ENCODE measurements at regions of chr19 and their contacts with region 1.

Region 1: DNA sequence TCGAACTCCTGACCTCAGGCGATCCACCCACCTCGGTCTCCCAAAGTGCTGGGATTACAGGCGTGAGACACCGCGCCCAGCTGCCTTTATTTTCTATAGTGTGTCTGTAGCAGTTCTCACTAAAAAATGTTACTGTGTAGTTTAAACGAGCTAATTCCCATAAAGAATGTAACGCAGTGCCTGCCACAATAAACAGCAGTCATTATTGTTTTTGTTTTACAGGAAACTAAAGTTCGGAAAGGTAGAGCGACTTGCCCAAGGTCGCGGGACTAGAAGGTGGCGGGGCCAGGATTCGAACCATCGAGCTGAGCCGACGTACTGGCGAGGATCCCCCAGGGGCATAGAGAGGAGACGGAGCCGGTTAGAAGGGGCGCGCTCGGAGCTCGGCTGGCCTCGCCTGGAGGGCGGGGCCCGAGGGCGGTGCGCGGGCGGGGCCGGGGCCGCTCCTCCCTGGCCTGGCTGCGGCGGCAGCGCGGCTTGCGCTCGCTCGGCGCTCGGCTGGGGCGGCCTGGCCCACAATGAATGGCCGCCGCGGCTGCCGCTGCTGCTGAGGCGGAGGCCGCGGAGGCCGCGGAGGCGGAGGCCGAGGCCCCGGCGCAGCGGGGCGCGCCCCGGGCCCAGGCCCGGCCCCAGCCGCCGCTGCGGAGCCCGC is at the start of gene NACC1:
- DNase-seq: peak; percentile 95
- H3K4me3 ChIP-seq: peak within 1 kb of the TSS; percentile 94
- H3K27ac ChIP-seq: peak within 1 kb of the TSS; percentile 75
- H3K4me1 ChIP-seq: peaks cover 34% of the 10 kb centered on the region
- CTCF ChIP-seq: no peak
- total RNA-seq, gene NACC1: 46.5 and 56.3 TPM in 2 replicates

Region 2: GRCh38 chr19:13104360-13104847 is 13.5 kb before region 1 on chr19:
- CTCF ChIA-PET with region 1: interaction called, 3 read pairs
- POLR2A ChIA-PET with region 1: interaction called, 4 read pairs
- intact Hi-C with region 1: loop called (anchors 1 kb)
- DNase-seq: peak; percentile 96
- H3K4me3 ChIP-seq: peak overlapping the region; percentile 83
- H3K27ac ChIP-seq: peak overlapping the region; percentile 96
- H3K4me1 ChIP-seq: peaks cover 60% of the 10 kb centered on the region
- CTCF ChIP-seq: peak; percentile 85